ENCODE measurements at regions of chr7 and their contacts with region 1.

Region 1: DNA sequence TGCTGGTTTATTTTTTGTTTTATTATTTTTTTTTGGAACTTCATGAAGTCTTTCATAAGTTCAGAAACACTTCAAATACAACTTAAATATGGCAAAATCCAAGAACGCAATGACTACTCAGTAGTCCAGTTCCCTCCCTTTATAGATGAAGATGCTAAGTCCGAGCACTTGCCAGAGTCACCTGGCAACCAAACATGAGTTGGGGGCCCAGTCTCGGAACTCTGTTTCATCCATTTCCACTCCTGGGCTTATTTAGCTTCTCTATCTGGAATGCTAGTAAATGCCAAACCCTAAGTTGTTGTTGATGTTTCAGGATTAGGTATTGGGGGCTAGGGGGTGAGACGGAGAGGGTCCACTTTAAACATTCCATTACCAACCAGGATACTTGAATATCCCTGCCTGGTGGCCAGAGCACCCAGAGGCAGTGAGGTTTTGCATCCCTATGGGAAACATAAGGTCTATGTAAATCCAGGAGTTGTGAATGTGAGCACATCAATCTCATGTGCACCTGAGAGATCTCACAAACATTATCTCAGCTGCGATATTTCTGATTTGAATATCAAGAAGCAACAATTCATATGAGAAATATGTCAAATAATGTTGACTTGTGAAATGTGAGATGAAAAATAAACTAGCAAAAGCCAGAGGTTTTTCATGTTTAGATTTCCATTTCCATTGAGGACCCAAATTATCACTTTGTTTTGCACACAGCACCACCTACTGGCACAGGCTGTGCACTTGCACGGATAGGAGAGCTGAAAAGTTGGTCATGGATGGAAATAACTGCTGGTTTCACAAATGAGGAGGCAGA is 129.3 kb downstream of the PKD1L1 start:
- DNase-seq: peak; percentile 71
- H3K4me3 ChIP-seq: no peak overlapping the region
- H3K27ac ChIP-seq: no peak overlapping the region
- H3K4me1 ChIP-seq: no peaks in the 10 kb centered on the region
- H3K27me3 ChIP-seq: no peaks in the 10 kb centered on the region
- CTCF ChIP-seq: peak; percentile 79 to 93
- POLR2A ChIP-seq: no peak

Region 2: GRCh38 chr7:47428092-47428767 is 390.8 kb before region 1 on chr7:
- CTCF ChIA-PET with region 1: interaction called, 16 read pairs
- POLR2A ChIA-PET with region 1: no interaction called
- dilution Hi-C with region 1: no loop called
- intact Hi-C with region 1: no loop called
- DNase-seq: peak; percentile 74
- H3K4me3 ChIP-seq: no peak overlapping the region
- H3K27ac ChIP-seq: peak overlapping the region; percentile 67
- H3K4me1 ChIP-seq: peaks cover 21% of the 10 kb centered on the region
- H3K27me3 ChIP-seq: no peaks in the 10 kb centered on the region
- CTCF ChIP-seq: no peak
- POLR2A ChIP-seq: no peak

Region 3: DNA sequence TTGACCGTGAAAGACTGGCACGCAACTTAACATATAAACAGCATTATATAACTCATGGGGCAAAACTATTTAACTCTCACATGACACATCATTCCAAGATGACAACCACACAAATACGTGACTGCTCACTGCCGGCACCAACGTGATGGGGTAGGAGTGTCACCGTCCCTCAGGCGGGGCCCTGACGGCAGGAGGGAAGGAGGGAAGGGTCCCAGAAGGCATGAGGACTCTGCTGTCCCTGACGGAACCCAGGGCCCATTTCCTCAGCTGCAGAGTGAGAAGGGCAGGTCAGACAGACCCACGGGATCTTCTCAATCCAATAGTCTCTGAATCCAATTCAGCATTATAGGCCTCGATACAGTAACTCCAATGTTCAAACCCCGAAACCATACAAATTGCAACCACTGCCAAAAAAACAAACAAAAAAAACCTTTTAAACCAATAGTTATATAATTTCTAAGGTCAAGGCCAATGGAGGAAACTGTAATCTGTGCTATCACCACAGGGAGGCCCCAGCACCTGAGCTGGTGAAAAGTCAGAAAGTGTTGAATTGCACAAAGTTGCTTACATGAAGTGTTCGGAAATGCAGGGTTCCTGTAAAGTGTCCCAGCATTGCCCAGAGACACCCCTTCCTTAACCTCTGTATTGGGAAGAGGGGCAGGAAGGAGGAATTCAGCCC is 374.5 kb before region 1 on chr7:
- CTCF ChIA-PET with region 1: interaction called, 28 read pairs
- POLR2A ChIA-PET with region 1: no interaction called
- dilution Hi-C with region 1: no loop called
- intact Hi-C with region 1: loop called (anchors 2 kb)
- DNase-seq: peak; percentile 23
- H3K4me3 ChIP-seq: no peak overlapping the region
- H3K27ac ChIP-seq: no peak overlapping the region
- H3K4me1 ChIP-seq: no peaks in the 10 kb centered on the region
- H3K27me3 ChIP-seq: no peaks in the 10 kb centered on the region
- CTCF ChIP-seq: peak; percentile 48 to 52
- POLR2A ChIP-seq: no peak

Region 4: GRCh38 chr7:47482013-47482875 is 336.8 kb before region 1 on chr7:
- CTCF ChIA-PET with region 1: interaction called, 21 read pairs
- POLR2A ChIA-PET with region 1: no interaction called
- dilution Hi-C with region 1: no loop called
- intact Hi-C with region 1: loop called (anchors 2 kb)
- DNase-seq: peak; percentile 83
- H3K4me3 ChIP-seq: no peak overlapping the region
- H3K27ac ChIP-seq: peak overlapping the region; percentile 89
- H3K4me1 ChIP-seq: peaks cover 16% of the 10 kb centered on the region
- H3K27me3 ChIP-seq: no peaks in the 10 kb centered on the region
- CTCF ChIP-seq: no peak
- POLR2A ChIP-seq: peak; percentile 49

Region 5: DNA sequence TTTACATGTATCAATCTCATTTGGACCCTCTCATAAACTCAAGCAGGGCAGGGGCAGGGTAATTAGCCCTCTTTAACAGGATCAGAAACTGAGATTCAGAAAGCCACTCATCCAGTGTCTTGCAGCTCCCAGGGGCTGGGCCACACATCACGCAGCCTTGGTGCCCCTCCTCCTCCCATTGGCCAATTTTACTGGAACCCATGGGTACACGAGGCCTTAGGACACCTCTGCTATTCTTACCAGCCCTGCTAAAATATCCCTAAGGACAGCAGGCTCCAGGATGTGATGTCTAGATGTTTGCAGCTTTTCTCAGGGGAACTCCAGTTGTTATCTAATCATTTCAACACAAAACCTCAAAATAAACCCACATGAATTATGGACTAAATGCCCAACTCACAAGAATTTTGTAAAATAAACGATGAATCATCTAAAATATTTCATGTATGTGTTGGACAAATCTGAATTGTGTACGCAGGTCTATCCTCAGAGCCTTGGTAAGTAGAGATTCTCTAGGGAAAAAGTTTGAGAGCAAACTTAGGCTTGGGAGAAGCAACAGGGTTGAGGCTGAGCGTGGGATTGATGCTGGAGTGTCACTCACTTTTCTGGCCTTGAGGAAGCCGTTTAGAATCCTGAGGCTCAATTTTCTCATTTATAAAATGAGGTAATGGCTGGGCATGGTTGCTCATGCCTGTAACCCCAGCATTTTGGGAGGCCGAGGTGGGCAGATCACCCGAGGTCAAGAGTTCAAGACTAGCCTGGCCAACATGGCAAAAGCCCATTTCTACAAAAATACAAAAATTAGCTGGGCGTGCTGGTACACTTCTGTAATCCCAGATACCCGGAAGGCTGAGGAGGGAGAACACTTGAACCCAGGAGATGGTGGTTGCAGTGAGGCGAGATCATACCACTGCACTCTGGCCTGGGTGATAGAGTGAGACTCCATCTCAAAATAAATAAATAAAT is 167.4 kb before region 1 on chr7:
- CTCF ChIA-PET with region 1: no interaction called
- POLR2A ChIA-PET with region 1: no interaction called
- dilution Hi-C with region 1: no loop called
- intact Hi-C with region 1: loop called (anchors 5 kb)
- DNase-seq: peak; percentile 51
- H3K4me3 ChIP-seq: no peak overlapping the region
- H3K27ac ChIP-seq: no peak overlapping the region
- H3K4me1 ChIP-seq: peaks cover 9% of the 10 kb centered on the region
- H3K27me3 ChIP-seq: no peaks in the 10 kb centered on the region
- CTCF ChIP-seq: no peak
- POLR2A ChIP-seq: no peak

Region 6: GRCh38 chr7:47792521-47793121 is 26.4 kb before region 1 on chr7:
- CTCF ChIA-PET with region 1: interaction called, 25 read pairs
- POLR2A ChIA-PET with region 1: no interaction called
- dilution Hi-C with region 1: no loop called
- intact Hi-C with region 1: loop called (anchors 1 kb)
- DNase-seq: peak; percentile 69
- H3K4me3 ChIP-seq: no peak overlapping the region
- H3K27ac ChIP-seq: no peak overlapping the region
- H3K4me1 ChIP-seq: peaks cover 2% of the 10 kb centered on the region
- H3K27me3 ChIP-seq: no peaks in the 10 kb centered on the region
- CTCF ChIP-seq: peak; percentile 52 to 57
- POLR2A ChIP-seq: no peak

Region 7: DNA sequence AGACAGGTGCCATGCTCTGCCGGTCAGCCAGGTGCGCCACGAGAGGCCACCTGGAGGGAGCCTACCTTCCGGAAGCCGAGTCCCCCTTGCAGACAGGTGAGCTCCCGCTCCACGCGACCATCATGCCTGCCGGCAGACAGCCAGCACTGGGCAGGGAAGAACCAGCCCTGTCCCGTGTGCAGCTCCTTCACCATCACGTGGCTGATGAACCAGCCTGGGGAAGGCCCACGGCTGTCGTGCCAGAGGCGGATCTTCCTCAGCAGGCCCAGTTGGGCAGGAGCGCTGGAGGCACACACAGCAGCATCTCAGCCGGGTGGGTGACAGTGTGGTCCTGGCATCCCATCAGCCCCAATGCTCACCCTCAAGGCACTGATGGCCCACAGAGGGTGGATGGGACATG is 20.4 kb after region 1 on chr7:
- CTCF ChIA-PET with region 1: no interaction called
- POLR2A ChIA-PET with region 1: no interaction called
- dilution Hi-C with region 1: no loop called
- intact Hi-C with region 1: no loop called
- DNase-seq: no peak
- H3K4me3 ChIP-seq: no peak overlapping the region
- H3K27ac ChIP-seq: no peak overlapping the region
- H3K4me1 ChIP-seq: no peaks in the 10 kb centered on the region
- H3K27me3 ChIP-seq: no peaks in the 10 kb centered on the region
- CTCF ChIP-seq: no peak
- POLR2A ChIP-seq: no peak

Measured in endothelial cell of umbilical vein (primary cell).